ENCODE measurements at regions of chrX and their contacts with region 1.

Region 1: GRCh38 chrX:18833071-18833731 is 125.8 kb downstream of the PPEF1 start:
- DNase-seq: peak; percentile 11 to 79
- H3K4me3 ChIP-seq: peak overlapping the region in 1 of 2 donors; percentile 37
- H3K27ac ChIP-seq: peak overlapping the region; percentile 65 to 72
- H3K4me1 ChIP-seq: no peaks in the 10 kb centered on the region
- H3K27me3 ChIP-seq: no peaks in the 10 kb centered on the region
- CTCF ChIP-seq: no peak

Region 2: DNA sequence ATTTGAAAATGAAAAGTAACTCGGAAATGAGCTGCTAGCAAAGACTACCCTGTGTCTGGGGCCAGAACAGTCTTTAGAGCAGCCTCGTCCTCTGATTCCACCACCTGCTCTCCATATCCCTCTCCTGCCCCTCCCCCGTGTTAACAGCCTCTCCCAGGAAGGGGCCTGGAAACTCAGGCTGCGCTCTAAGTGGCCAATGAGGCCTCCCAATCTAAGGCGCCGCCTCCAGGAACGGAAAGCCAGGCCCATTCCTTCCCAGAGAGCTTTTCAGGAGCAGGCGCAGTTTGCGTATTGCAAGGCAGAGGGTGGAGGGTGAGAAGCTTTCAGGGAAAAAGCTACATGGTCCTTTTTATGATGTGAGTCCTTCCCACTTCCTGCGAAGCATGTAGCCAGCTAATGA is 192.5 kb before region 1 on chrX:
- intact Hi-C with region 1: no loop called
- DNase-seq: no peak
- H3K4me3 ChIP-seq: no peak overlapping the region
- H3K27ac ChIP-seq: no peak overlapping the region
- H3K4me1 ChIP-seq: no peaks in the 10 kb centered on the region
- H3K27me3 ChIP-seq: no peaks in the 10 kb centered on the region
- CTCF ChIP-seq: no peak

Region 3: DNA sequence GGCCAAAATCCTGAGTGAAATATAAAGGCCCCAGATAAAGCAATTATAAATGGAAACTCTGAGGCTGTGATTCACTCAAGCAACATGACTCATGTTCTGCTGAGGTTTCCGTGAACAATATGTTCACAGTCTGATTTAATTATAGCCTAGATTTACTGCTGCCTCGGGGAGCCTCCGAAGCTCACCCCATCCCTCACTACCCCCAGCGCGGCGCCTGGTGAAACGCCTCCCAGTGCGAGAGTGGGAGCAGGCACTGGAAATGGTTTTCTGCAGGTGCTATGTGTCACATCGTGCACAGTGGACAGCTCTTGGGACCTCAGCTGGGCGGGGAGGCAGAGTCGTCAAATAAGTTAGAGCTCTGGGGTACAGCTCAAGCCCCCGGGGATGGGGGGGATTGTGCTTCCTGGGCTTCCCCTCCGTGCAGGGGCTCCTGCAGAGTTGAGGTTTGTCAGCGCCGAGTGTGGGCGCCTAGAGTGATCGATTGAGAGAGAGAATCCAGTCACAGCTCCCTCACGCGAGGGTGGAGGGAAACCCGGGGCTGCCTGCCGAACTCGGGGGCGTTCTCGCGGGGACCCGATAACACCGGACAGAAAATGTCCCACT is 40.1 kb after region 1 on chrX:
- intact Hi-C with region 1: loop called (anchors 5 kb)
- DNase-seq: peak in 1 of 2 donors; percentile 71
- H3K4me3 ChIP-seq: peak overlapping the region in 1 of 2 donors; percentile 42
- H3K27ac ChIP-seq: peak overlapping the region; percentile 91
- H3K4me1 ChIP-seq: peaks cover 7 to 20% of the 10 kb centered on the region in 2 donors
- H3K27me3 ChIP-seq: no peaks in the 10 kb centered on the region
- CTCF ChIP-seq: no peak

Measured in ascending aorta (tissue), 2 donors.